WTC11 (cell line): ENCODE measurements at regions of chr2 and their contacts with region 1.

Region 1: GRCh38 chr2:85813982-85814801 is 60.4 kb downstream of the ATOH8 start:
- DNase-seq: peak; percentile 96
- ATAC-seq: peak; percentile 95
- H3K4me3 Mint-ChIP-seq: no peak overlapping the region
- H3K27ac Mint-ChIP-seq: no peak overlapping the region
- H3K4me1 Mint-ChIP-seq: peaks cover 9% of the 10 kb centered on the region
- H3K27me3 Mint-ChIP-seq: peaks cover 3% of the 10 kb centered on the region; the same call in 1 of the 2 replicates
- CTCF ChIP-seq: peak; percentile 95

Region 2: GRCh38 chr2:85635636-85636035 is 178.6 kb before region 1 on chr2:
- CTCF ChIA-PET with region 1: interaction called, 14 read pairs
- POLR2A ChIA-PET with region 1: no interaction called
- DNase-seq: no peak
- ATAC-seq: no peak
- H3K4me3 Mint-ChIP-seq: no peak overlapping the region
- H3K27ac Mint-ChIP-seq: no peak overlapping the region
- H3K4me1 Mint-ChIP-seq: no peaks in the 10 kb centered on the region
- H3K27me3 Mint-ChIP-seq: no peaks in the 10 kb centered on the region
- CTCF ChIP-seq: no peak

Region 3: DNA sequence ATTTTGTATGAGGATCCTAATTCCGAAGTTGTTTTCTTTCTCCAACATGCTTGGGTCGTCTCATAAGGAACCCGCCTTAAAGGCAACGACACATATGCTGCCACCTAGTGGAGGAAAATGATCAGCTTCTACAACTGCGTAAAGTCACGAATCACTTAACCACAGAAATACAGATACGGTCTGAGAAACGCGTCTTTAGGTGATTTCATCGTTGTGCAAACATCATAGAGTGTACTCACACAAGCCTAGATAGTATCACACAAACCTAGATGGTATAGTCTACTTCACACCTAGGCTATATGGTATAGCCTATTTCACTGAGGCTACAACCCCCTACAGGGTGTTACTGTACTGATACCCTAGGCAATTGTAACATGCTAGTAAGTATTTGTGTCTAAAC is 106.9 kb before region 1 on chr2:
- CTCF ChIA-PET with region 1: interaction called, 14 read pairs
- POLR2A ChIA-PET with region 1: no interaction called
- DNase-seq: peak; percentile 47
- ATAC-seq: peak; percentile 82
- H3K4me3 Mint-ChIP-seq: no peak overlapping the region
- H3K27ac Mint-ChIP-seq: no peak overlapping the region
- H3K4me1 Mint-ChIP-seq: peaks cover 15% of the 10 kb centered on the region
- H3K27me3 Mint-ChIP-seq: peaks cover 12% of the 10 kb centered on the region
- CTCF ChIP-seq: peak; percentile 72; the same call in 1 of the 2 replicates

Region 4: DNA sequence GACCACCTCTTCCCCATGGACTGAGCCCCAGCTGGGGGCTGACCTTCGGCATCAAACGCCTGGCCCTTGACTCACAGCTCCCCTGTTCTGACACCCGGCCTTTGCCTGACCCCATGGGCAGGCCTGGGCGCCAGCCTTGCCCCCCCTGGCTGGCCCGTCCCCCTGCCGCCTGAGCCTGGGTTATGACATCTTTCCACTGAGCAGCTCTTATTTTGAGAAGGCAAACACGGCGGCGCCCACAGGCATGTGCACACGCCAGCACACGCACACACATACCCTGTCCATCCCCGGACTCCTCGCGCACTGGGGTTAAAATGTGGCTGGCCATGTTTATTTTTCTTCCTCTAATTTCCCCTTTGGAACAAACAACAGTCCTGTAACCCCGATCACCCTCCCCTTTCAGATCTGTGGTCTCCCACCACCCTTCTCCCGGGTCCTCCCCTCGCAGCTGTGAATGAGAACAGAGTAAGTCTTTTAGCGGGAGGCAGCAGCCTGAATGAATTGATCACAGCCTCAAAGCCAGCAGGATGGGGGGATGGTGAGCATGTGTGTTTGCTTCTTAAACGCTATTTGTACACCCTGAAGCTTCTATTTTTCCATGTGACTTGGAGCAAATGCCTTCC is 72.2 kb before region 1 on chr2:
- CTCF ChIA-PET with region 1: interaction called, 31 read pairs
- POLR2A ChIA-PET with region 1: no interaction called
- DNase-seq: no peak
- ATAC-seq: no peak
- H3K4me3 Mint-ChIP-seq: no peak overlapping the region
- H3K27ac Mint-ChIP-seq: no peak overlapping the region
- H3K4me1 Mint-ChIP-seq: peaks cover 7% of the 10 kb centered on the region
- H3K27me3 Mint-ChIP-seq: peaks cover 10% of the 10 kb centered on the region
- CTCF ChIP-seq: no peak

Region 5: GRCh38 chr2:85765081-85765731 is 49.0 kb before region 1 on chr2:
- CTCF ChIA-PET with region 1: interaction called, 14 read pairs
- POLR2A ChIA-PET with region 1: no interaction called
- DNase-seq: peak; percentile 63
- ATAC-seq: peak; percentile 52
- H3K4me3 Mint-ChIP-seq: peak overlapping the region; percentile 67
- H3K27ac Mint-ChIP-seq: no peak overlapping the region
- H3K4me1 Mint-ChIP-seq: peaks cover 56% of the 10 kb centered on the region
- H3K27me3 Mint-ChIP-seq: peaks cover 47% of the 10 kb centered on the region
- CTCF ChIP-seq: no peak